Naive thymus-derived CD4-positive, alpha-beta T cell (primary cell): ENCODE measurements at regions of chr6 and their contacts with region 1.

Region 1: GRCh38 chr6:39302669-39303424 is 11.4 kb downstream of the KCNK17 start:
- DNase-seq: peak; percentile 60 to 86 (median 79)
- ATAC-seq: peak; percentile 94
- H3K4me3 ChIP-seq: peak overlapping the region; percentile 45
- H3K4me3 Mint-ChIP-seq: peak overlapping the region; percentile 28 to 86 (median 76)
- H3K27ac ChIP-seq: no peak overlapping the region
- H3K27ac Mint-ChIP-seq: peak overlapping the region in 3 of 9 donors; percentile 16 to 48 (median 18)
- H3K4me1 ChIP-seq: no peaks in the 10 kb centered on the region
- H3K4me1 Mint-ChIP-seq: peaks cover 0 to 9% (median 4%) of the 10 kb centered on the region in 7 donors
- H3K27me3 ChIP-seq: no peaks in the 10 kb centered on the region
- H3K27me3 Mint-ChIP-seq: peaks cover 0 to 6% (median 0%) of the 10 kb centered on the region in 5 donors

Region 2: GRCh38 chr6:38877721-38878120 is 425.1 kb before region 1 on chr6:
- CTCF ChIA-PET with region 1: interaction called, 26 read pairs
- POLR2A ChIA-PET with region 1: interaction called, 4 read pairs
- intact Hi-C with region 1: loop called (anchors 1 kb)
- DNase-seq: no peak
- ATAC-seq: no peak
- H3K4me3 ChIP-seq: no peak overlapping the region
- H3K4me3 Mint-ChIP-seq: no peak overlapping the region
- H3K27ac ChIP-seq: no peak overlapping the region
- H3K27ac Mint-ChIP-seq: peak overlapping the region in 1 of 9 donors; percentile 26
- H3K4me1 ChIP-seq: peaks cover 9 to 24% of the 10 kb centered on the region in 2 donors
- H3K4me1 Mint-ChIP-seq: peaks cover 13 to 45% (median 25%) of the 10 kb centered on the region in 7 donors
- H3K27me3 ChIP-seq: no peaks in the 10 kb centered on the region
- H3K27me3 Mint-ChIP-seq: peaks cover 0 to 6% (median 0%) of the 10 kb centered on the region in 5 donors

Region 3: GRCh38 chr6:38997128-38997761 is 305.6 kb before region 1 on chr6:
- CTCF ChIA-PET with region 1: interaction called, 19 read pairs
- POLR2A ChIA-PET with region 1: no interaction called
- intact Hi-C with region 1: loop called in 1 of 2 experiments (anchors 1 kb)
- DNase-seq: peak in 5 of 9 donors; percentile 3 to 27 (median 18)
- ATAC-seq: no peak
- H3K4me3 ChIP-seq: no peak overlapping the region
- H3K4me3 Mint-ChIP-seq: no peak overlapping the region
- H3K27ac ChIP-seq: no peak overlapping the region
- H3K27ac Mint-ChIP-seq: peak overlapping the region in 1 of 9 donors; percentile 62
- H3K4me1 ChIP-seq: no peaks in the 10 kb centered on the region
- H3K4me1 Mint-ChIP-seq: no peaks in the 10 kb centered on the region
- H3K27me3 ChIP-seq: no peaks in the 10 kb centered on the region
- H3K27me3 Mint-ChIP-seq: peaks cover 42 to 60% (median 47%) of the 10 kb centered on the region in 5 donors

Region 4: DNA sequence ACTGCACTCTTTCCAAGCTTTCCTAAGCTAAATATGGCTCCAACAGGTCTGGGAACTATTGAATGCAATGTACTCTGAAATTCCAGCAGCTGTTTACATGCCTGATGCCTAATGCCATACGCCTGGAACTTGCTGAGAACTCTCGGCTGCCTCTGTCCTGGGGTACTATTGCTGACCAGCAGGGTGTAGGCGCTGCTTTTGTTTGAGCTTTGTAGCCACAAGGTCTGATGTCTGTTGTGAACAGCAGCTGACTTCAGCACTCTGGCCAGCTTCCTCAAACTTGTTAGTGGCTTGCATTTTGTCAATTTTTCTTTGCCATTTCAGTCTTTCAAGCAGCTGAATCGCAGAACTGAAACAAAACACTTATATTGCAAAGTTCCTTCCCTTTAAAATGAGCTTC is 214.5 kb before region 1 on chr6:
- CTCF ChIA-PET with region 1: no interaction called
- POLR2A ChIA-PET with region 1: no interaction called
- intact Hi-C with region 1: loop called in 1 of 2 experiments (anchors 1 kb)
- DNase-seq: peak in 3 of 9 donors; percentile 6 to 15 (median 8)
- ATAC-seq: peak; percentile 54
- H3K4me3 ChIP-seq: no peak overlapping the region
- H3K4me3 Mint-ChIP-seq: no peak overlapping the region
- H3K27ac ChIP-seq: no peak overlapping the region
- H3K27ac Mint-ChIP-seq: peak overlapping the region in 1 of 9 donors; percentile 17
- H3K4me1 ChIP-seq: no peaks in the 10 kb centered on the region
- H3K4me1 Mint-ChIP-seq: peaks cover 0 to 17% (median 4%) of the 10 kb centered on the region in 7 donors
- H3K27me3 ChIP-seq: no peaks in the 10 kb centered on the region
- H3K27me3 Mint-ChIP-seq: peaks cover 23 to 69% (median 49%) of the 10 kb centered on the region in 5 donors

Region 5: DNA sequence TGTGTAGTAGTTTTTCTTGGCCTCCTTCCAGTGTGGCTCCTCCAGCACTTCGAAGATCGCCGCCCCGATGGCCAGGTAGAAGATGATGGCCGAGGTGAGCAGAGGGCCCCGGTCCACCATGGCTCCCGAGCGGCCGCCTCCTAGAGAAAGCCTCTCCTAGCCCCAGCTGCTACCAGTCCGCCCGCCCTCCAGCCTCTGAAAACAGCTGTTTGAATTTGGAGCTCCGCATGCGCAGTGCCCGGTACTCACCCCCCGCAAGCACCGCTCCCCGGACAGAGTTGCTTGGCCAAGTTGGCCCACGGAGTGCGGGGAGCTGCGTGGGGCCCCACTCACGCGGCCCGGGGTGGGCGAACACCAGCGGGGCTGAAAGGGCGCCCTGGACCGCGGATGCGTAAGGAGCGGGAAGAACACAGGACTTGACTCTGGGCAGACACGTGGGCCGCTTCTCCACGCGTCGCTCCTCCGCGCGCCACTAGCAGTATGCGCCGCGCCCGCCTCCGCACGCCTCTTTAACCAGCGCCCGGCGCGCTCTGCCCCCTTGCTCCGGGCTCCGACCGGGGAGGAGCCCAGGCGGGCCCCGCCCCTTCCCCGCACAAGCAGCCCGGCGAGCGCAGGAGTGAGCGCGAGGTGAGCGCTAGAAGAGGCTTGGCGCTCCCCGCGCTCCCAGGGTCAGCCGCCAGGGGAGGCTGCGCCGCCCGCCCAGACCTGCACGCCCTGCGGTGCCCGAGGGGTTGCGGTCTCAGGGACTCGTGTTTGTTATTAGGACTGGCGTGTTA is 73.7 kb before region 1 on chr6 and contains the start of gene KCNK5:
- CTCF ChIA-PET with region 1: no interaction called
- POLR2A ChIA-PET with region 1: no interaction called
- intact Hi-C with region 1: loop called in 1 of 2 experiments (anchors 1 kb)
- DNase-seq: peak; percentile 5 to 91 (median 42)
- ATAC-seq: peak; percentile 88
- H3K4me3 ChIP-seq: peak within 1 kb of the TSS; percentile 54
- H3K4me3 Mint-ChIP-seq: peak within 1 kb of the TSS; percentile 61 to 86 (median 72)
- H3K27ac ChIP-seq: no peak within 1 kb of the TSS
- H3K27ac Mint-ChIP-seq: peak within 1 kb of the TSS in 2 of 9 donors; percentile 51 to 91
- H3K4me1 ChIP-seq: peaks cover 18 to 43% of the 10 kb centered on the region in 2 donors
- H3K4me1 Mint-ChIP-seq: peaks cover 15 to 48% (median 33%) of the 10 kb centered on the region in 7 donors
- H3K27me3 ChIP-seq: no peaks in the 10 kb centered on the region
- H3K27me3 Mint-ChIP-seq: peaks cover 0 to 12% (median 6%) of the 10 kb centered on the region in 5 donors
- total RNA-seq, gene KCNK5: 0.24 to 9.6 (median 0.34) TPM in 3 of 5 experiments, not detected in the others

Region 6: GRCh38 chr6:39280247-39280731 is 22.6 kb before region 1 on chr6:
- CTCF ChIA-PET with region 1: no interaction called
- POLR2A ChIA-PET with region 1: no interaction called
- intact Hi-C with region 1: no loop called
- DNase-seq: no peak
- ATAC-seq: no peak
- H3K4me3 ChIP-seq: no peak overlapping the region
- H3K4me3 Mint-ChIP-seq: no peak overlapping the region
- H3K27ac ChIP-seq: no peak overlapping the region
- H3K27ac Mint-ChIP-seq: no peak overlapping the region
- H3K4me1 ChIP-seq: no peaks in the 10 kb centered on the region
- H3K4me1 Mint-ChIP-seq: peaks cover 0 to 3% (median 0%) of the 10 kb centered on the region in 7 donors
- H3K27me3 ChIP-seq: no peaks in the 10 kb centered on the region
- H3K27me3 Mint-ChIP-seq: peaks cover 0 to 10% (median 4%) of the 10 kb centered on the region in 5 donors

Region 7: GRCh38 chr6:39313526-39314272 is 10.9 kb after region 1 on chr6:
- CTCF ChIA-PET with region 1: no interaction called
- POLR2A ChIA-PET with region 1: no interaction called
- intact Hi-C with region 1: no loop called
- DNase-seq: no peak
- ATAC-seq: no peak
- H3K4me3 ChIP-seq: no peak overlapping the region
- H3K4me3 Mint-ChIP-seq: peak overlapping the region in 3 of 10 donors; percentile 42 to 52 (median 44)
- H3K27ac ChIP-seq: no peak overlapping the region
- H3K27ac Mint-ChIP-seq: no peak overlapping the region
- H3K4me1 ChIP-seq: no peaks in the 10 kb centered on the region
- H3K4me1 Mint-ChIP-seq: peaks cover 0 to 7% (median 0%) of the 10 kb centered on the region in 7 donors
- H3K27me3 ChIP-seq: no peaks in the 10 kb centered on the region
- H3K27me3 Mint-ChIP-seq: peaks cover 24 to 57% (median 44%) of the 10 kb centered on the region in 5 donors

Region 8: GRCh38 chr6:41008011-41008410 is 1705.2 kb after region 1 on chr6:
- CTCF ChIA-PET with region 1: no interaction called
- POLR2A ChIA-PET with region 1: no interaction called
- intact Hi-C with region 1: no loop called
- DNase-seq: no peak
- ATAC-seq: no peak
- H3K4me3 ChIP-seq: no peak overlapping the region
- H3K4me3 Mint-ChIP-seq: no peak overlapping the region
- H3K27ac ChIP-seq: no peak overlapping the region
- H3K27ac Mint-ChIP-seq: no peak overlapping the region
- H3K4me1 ChIP-seq: no peaks in the 10 kb centered on the region
- H3K4me1 Mint-ChIP-seq: peaks cover 0 to 6% (median 4%) of the 10 kb centered on the region in 7 donors
- H3K27me3 ChIP-seq: no peaks in the 10 kb centered on the region
- H3K27me3 Mint-ChIP-seq: peaks cover 7 to 35% (median 15%) of the 10 kb centered on the region in 5 donors